ENCODE measurements at regions of chr5 and their contacts with region 1.

Region 1: DNA sequence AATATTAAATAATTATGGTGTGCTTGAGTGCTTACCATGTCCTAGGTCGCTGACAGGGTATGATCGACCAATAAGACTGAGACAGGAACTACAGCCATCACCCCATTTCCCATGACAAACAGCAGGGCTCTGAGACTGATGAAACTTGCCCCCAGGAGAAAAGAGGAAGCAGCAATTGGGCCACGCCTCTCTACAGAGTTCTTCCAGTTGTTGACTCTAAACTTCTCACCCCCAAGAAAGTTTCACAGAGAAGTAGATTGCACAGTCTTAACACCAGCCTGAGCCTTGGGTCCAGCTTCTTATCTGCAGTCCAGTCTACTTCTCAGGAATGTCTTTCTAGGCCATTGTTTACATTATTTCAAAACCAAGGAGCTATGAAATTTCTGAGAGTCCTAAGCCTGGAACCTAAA is 182.2 kb upstream of the ANKRD55 start:
- DNase-seq: peak; percentile 91
- ATAC-seq: peak; percentile 98
- H3K4me3 ChIP-seq: no peak overlapping the region
- H3K27ac ChIP-seq: peak overlapping the region; percentile 90
- H3K4me1 ChIP-seq: peaks cover 12% of the 10 kb centered on the region
- H3K27me3 ChIP-seq: no peaks in the 10 kb centered on the region
- CTCF ChIP-seq: no peak
- POLR2A ChIP-seq: no peak
- RAD21 ChIP-seq: no peak

Region 2: GRCh38 chr5:56481428-56482357 is 66.3 kb after region 1 on chr5:
- CTCF ChIA-PET with region 1: interaction called, 3 read pairs
- POLR2A ChIA-PET with region 1: no interaction called
- dilution Hi-C with region 1: no loop called
- in situ Hi-C with region 1: no loop called
- intact Hi-C with region 1: loop called (anchors 5 kb)
- DNase-seq: peak; percentile 54
- ATAC-seq: peak; percentile 31
- H3K4me3 ChIP-seq: peak overlapping the region; percentile 37
- H3K27ac ChIP-seq: peak overlapping the region; percentile 58
- H3K4me1 ChIP-seq: peaks cover 21% of the 10 kb centered on the region
- H3K27me3 ChIP-seq: no peaks in the 10 kb centered on the region
- CTCF ChIP-seq: peak; percentile 27; the same call in 1 of the 2 replicates
- POLR2A ChIP-seq: 0 out of 2 replicates have a peak, but pooled peaks have one; percentile 42
- RAD21 ChIP-seq: peak; percentile 12; the same call in 1 of the 2 replicates

Region 3: DNA sequence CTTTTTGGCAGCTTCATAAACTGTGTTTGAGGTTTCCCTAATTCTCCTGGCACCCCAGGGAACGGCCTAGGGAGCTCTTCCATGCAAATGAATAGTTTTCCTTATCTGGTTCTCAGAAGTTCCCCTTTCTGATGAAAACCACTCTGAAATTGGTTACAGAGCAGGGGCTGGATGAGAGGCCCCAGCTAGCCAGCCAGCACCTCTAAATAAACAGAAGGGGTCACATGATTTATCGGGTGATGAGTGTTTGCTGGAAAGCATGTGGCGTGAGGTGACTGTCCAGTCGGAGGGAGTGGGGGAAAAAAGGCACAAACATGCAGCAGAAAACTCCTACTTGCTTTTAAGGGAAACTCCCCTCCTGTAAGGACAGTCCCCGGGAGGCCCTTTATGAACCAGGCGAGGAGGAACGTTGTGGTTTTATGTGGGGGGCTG is 79.0 kb after region 1 on chr5:
- CTCF ChIA-PET with region 1: no interaction called
- POLR2A ChIA-PET with region 1: no interaction called
- dilution Hi-C with region 1: no loop called
- in situ Hi-C with region 1: no loop called
- intact Hi-C with region 1: no loop called
- DNase-seq: peak; percentile 65
- ATAC-seq: peak; percentile 85
- H3K4me3 ChIP-seq: no peak overlapping the region
- H3K27ac ChIP-seq: peak overlapping the region; percentile 60; the same call in 1 of the 2 replicates
- H3K4me1 ChIP-seq: peaks cover 15% of the 10 kb centered on the region
- H3K27me3 ChIP-seq: no peaks in the 10 kb centered on the region
- CTCF ChIP-seq: no peak
- POLR2A ChIP-seq: no peak
- RAD21 ChIP-seq: no peak

Region 4: GRCh38 chr5:56523790-56524575 is 108.6 kb after region 1 on chr5:
- CTCF ChIA-PET with region 1: interaction called, 13 read pairs
- POLR2A ChIA-PET with region 1: no interaction called
- dilution Hi-C with region 1: no loop called
- in situ Hi-C with region 1: no loop called
- intact Hi-C with region 1: no loop called
- DNase-seq: peak; percentile 19
- ATAC-seq: no peak
- H3K4me3 ChIP-seq: no peak overlapping the region
- H3K27ac ChIP-seq: no peak overlapping the region
- H3K4me1 ChIP-seq: peaks cover 2% of the 10 kb centered on the region; the same call in 1 of the 2 replicates
- H3K27me3 ChIP-seq: peaks cover 6% of the 10 kb centered on the region
- CTCF ChIP-seq: no peak
- POLR2A ChIP-seq: no peak
- RAD21 ChIP-seq: no peak

Region 5: DNA sequence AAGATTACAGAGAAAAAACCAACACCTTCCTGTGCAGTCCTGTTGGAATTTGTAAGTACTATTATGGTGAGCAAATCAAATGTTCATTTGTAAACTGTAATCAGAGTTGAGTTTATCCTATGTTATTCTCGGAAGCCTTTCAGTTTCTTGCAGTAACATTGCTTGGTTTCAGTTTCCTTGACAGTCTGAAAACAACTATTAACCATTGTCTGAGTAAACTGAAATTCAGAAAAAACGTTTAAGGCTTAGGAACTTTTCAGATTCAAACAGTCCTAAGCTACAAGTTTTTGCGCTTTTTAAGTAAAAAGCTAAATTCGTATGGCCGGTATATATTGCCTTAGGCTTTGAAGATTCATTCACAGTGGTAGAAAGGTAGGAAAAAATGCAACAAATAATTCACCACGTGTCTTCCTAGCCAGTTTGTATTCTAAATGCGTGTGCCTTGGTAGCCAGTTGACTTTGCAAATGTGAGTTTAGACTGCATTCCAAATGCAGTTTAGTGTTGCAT is 761.0 kb after region 1 on chr5:
- CTCF ChIA-PET with region 1: no interaction called
- POLR2A ChIA-PET with region 1: no interaction called
- dilution Hi-C with region 1: no loop called
- in situ Hi-C with region 1: no loop called
- intact Hi-C with region 1: no loop called
- DNase-seq: peak; percentile 80
- ATAC-seq: no peak
- H3K4me3 ChIP-seq: peak overlapping the region; percentile 48
- H3K27ac ChIP-seq: no peak overlapping the region
- H3K4me1 ChIP-seq: peaks cover 4% of the 10 kb centered on the region; the same call in 1 of the 2 replicates
- H3K27me3 ChIP-seq: no peaks in the 10 kb centered on the region
- CTCF ChIP-seq: no peak
- POLR2A ChIP-seq: 0 out of 2 replicates have a peak, but pooled peaks have one; percentile 33
- RAD21 ChIP-seq: no peak